ENCODE measurements at regions of chr22 and their contacts with region 1.

Region 1: GRCh38 chr22:46563381-46564083 is 26.1 kb upstream of the CELSR1 start:
- DNase-seq: peak; percentile 77 to 88 (median 87)
- H3K4me3 ChIP-seq: peak overlapping the region in 1 of 7 experiments; percentile 19
- H3K27ac ChIP-seq: no peak overlapping the region
- H3K4me1 ChIP-seq: peaks cover 0 to 27% (median 25%) of the 10 kb centered on the region in 4 experiments
- H3K27me3 ChIP-seq: no peaks in the 10 kb centered on the region

Region 2: GRCh38 chr22:46399251-46399999 is 164.1 kb before region 1 on chr22:
- CTCF ChIA-PET with region 1: no interaction called
- POLR2A ChIA-PET with region 1: no interaction called
- DNase-seq: no peak
- H3K4me3 ChIP-seq: no peak overlapping the region
- H3K27ac ChIP-seq: no peak overlapping the region
- H3K4me1 ChIP-seq: no peaks in the 10 kb centered on the region
- H3K27me3 ChIP-seq: peaks cover 0 to 7% (median 0%) of the 10 kb centered on the region in 5 experiments

Region 3: DNA sequence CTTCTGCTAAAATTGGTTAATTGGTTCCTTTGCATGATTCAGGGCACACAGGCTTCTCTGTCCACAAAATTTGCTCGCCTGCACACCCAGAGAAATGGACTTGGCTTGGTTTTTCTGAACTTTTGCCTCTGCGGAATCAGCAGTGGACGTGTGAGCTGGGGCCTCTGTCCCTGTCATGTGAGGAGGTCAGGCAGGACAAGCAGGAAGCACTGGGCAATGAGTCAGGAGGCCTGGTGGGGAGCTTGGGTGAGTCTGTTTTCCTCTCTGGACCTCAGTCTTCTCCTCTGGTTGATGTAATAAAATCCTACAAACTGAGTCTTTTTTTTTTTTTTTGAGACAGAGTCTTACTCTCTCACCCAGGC is 15.7 kb before region 1 on chr22:
- CTCF ChIA-PET with region 1: interaction called, 17 read pairs
- POLR2A ChIA-PET with region 1: no interaction called
- DNase-seq: no peak
- H3K4me3 ChIP-seq: no peak overlapping the region
- H3K27ac ChIP-seq: no peak overlapping the region
- H3K4me1 ChIP-seq: peaks cover 0 to 10% (median 6%) of the 10 kb centered on the region in 4 experiments
- H3K27me3 ChIP-seq: peaks cover 0 to 11% (median 0%) of the 10 kb centered on the region in 5 experiments

Region 4: DNA sequence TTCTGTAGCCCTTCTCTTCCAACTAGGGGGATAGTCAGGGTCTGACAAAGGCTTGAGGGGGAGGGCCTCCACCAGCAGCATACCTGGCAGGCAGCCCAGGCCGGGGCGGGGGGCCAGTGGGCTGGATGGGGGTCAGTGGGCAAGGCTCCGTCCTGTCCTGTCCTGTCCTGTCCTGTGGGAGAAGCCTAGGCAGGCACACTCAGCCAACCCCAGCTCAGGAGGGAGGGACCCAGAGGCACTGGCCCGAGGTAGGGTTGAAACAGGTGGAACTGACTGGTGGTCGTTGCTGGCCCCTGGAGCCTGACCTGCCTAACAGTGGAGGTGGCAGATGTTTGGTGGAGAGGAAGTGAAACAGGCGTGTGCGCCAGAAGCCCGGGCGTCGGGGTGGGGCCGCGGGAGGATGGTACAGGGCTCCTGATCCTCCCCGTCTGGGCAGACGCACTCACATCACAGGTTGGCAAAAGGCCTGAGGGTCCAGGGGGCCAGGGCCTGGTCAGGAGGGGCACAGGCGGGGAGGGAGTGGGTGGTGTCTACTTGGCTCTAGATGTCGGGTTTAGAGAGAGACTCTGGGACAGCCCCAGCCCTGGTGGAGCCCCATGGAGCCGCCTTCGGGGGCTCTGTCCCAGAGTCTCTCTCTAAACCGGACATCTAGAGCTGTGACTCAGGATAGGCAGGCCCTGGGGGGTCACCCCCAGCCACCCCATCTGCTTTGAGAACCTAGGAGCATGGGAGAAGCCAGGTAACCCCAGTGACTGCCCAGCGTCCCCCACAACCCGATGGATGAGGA is 24.2 kb after region 1 on chr22:
- CTCF ChIA-PET with region 1: interaction called, 10 read pairs
- POLR2A ChIA-PET with region 1: interaction called, 3 read pairs
- DNase-seq: peak in 2 of 3 donors; percentile 66 to 82
- H3K4me3 ChIP-seq: no peak overlapping the region
- H3K27ac ChIP-seq: no peak overlapping the region
- H3K4me1 ChIP-seq: peaks cover 6 to 62% (median 50%) of the 10 kb centered on the region in 4 experiments
- H3K27me3 ChIP-seq: no peaks in the 10 kb centered on the region

Region 5: DNA sequence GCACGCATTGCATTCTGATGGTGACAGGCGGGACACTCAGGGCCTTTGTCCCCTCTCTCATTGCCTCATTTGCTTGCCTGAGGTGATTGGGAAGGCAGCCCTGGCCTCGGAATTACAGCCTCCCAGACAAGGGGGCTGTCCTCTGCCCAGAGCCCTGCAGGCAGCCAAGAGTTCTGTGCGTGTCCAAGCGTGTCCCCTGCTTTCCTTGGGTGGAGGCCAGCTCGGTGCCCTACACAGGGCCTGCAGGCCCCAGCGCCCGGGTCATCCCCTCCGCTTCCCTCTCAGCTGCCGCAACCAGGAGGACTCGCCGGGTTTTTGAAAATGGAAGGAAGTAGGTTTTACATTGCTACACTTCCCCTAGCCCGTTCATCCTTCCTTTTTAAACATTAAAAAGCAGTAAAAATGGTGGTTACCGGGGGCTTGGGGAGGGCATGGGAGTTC is 58.6 kb after region 1 on chr22:
- CTCF ChIA-PET with region 1: interaction called, 10 read pairs
- POLR2A ChIA-PET with region 1: interaction called, 3 read pairs
- DNase-seq: peak in 2 of 3 donors; percentile 37 to 39
- H3K4me3 ChIP-seq: no peak overlapping the region
- H3K27ac ChIP-seq: no peak overlapping the region
- H3K4me1 ChIP-seq: peaks cover 0 to 63% (median 26%) of the 10 kb centered on the region in 4 experiments
- H3K27me3 ChIP-seq: no peaks in the 10 kb centered on the region

Region 6: GRCh38 chr22:46661221-46661851 is 97.8 kb after region 1 on chr22:
- CTCF ChIA-PET with region 1: interaction called, 13 read pairs
- POLR2A ChIA-PET with region 1: no interaction called
- DNase-seq: no peak
- H3K4me3 ChIP-seq: peak overlapping the region in 1 of 7 experiments; percentile 23
- H3K27ac ChIP-seq: no peak overlapping the region
- H3K4me1 ChIP-seq: peaks cover 0 to 26% (median 16%) of the 10 kb centered on the region in 4 experiments
- H3K27me3 ChIP-seq: no peaks in the 10 kb centered on the region

Region 7: DNA sequence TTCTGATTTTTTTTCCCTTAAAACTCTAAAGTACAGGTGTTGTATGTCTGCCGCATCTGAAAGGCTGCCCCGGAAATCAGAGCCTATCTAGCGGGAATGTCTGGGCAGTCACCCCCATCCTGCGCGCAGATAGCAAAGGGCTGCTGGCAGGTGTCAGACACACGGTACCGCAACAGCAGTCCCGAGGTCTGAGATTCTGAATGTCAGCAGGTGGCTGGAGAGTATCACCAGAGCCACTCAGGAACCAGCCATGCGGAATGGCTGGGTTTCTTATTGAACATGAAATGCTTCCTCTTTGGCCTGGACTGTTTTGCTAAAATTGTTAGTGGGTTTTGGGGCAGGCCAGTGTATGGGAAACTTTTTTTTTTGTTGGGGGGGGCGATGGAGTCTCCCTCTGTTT is 121.2 kb after region 1 on chr22:
- CTCF ChIA-PET with region 1: interaction called, 24 read pairs
- POLR2A ChIA-PET with region 1: no interaction called
- DNase-seq: peak in 2 of 3 donors; percentile 47 to 58
- H3K4me3 ChIP-seq: no peak overlapping the region
- H3K27ac ChIP-seq: no peak overlapping the region
- H3K4me1 ChIP-seq: peaks cover 15 to 42% (median 33%) of the 10 kb centered on the region in 4 experiments
- H3K27me3 ChIP-seq: no peaks in the 10 kb centered on the region

Measured in common myeloid progenitor, CD34-positive (primary cell).